GM18951 (cell line): ENCODE measurements at regions of chr2 and their contacts with region 1.

Region 1: DNA sequence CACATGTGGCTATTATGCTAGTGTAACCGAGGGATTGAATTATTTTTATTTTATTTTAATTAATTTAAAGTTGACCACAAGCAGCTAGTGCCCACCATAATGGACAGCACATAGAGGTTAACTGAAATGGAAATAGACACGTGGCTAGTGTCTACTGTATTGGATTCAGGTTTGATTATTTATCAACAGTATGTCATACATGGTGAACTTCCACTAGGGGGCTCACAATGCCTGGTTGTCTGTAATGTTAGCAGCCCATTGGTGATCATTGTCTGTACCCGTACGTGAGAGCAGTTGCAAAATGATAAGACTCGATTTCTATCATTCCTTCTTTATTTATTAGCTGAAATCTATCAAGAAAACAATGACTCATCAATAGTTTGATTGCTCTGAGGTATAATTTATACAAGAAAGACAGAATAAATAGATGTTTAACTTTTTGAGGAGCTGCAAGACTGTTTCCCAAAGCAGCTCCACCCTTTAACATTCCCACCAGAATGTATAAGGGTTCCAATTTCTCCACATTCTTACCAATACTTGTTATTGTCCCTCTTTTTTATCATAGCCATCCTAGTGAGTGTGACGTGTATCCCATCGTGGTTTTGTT is 76.5 kb downstream of the CYBRD1 start:
- POLR2A ChIP-seq: no peak

Region 2: GRCh38 chr2:171706152-171706803 is 107.5 kb after region 1 on chr2:
- in situ Hi-C with region 1: no loop called
- POLR2A ChIP-seq: no peak

Region 3: DNA sequence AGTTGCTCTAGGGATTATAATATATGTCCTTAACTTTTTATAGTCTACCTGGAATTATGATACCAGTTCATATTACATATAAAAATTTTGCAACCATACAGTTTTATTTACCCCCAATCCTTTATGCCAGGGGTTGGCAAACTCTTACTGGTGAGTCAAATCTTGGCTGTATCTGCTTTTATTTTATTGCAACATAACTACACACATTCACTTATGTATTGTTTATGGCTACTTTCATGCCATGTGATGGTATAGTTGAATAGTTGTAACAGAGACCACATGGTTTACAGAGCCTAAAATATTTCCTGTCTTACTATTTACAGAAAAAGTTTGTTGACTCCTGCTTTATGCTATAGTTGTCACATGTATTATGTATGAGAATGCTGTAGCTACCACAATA is 529.7 kb after region 1 on chr2:
- in situ Hi-C with region 1: loop called (anchors 10 kb)
- POLR2A ChIP-seq: no peak